ENCODE measurements at regions of chr15 and their contacts with region 1.

Region 1: DNA sequence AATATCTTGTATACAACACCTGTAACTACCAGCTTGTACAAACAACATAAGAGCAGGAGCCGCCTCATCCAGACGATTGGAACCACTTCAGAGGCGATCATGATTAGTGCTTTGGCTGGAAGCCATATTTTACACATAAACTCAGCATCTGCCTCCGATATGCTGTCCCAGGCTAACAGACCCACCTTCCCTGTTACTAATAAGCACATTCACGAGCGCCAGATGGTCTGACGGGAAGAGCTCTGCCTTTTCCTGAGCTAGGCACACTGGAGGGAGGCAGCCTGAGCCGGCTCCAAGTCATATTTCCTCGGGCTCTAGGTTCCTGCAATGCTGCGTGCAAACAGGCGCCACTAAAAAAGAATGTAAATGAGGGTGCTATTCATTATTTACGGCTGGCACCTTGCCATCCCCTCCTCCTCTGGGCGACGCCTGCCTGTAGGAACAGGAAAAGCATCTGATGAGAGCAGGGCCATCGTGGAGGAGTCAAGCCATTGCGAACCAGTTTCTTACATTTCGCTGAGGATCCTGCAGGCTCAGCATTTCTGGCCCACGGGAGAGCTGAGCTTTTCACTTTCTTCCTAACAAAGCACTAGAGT is 98.2 kb downstream of the ANXA2 start:
- DNase-seq: no peak
- ATAC-seq: no peak
- H3K4me3 Mint-ChIP-seq: no peak overlapping the region
- H3K27ac Mint-ChIP-seq: no peak overlapping the region
- H3K4me1 Mint-ChIP-seq: no peaks in the 10 kb centered on the region
- H3K27me3 Mint-ChIP-seq: peaks cover 2% of the 10 kb centered on the region
- CTCF ChIP-seq: no peak

Region 2: GRCh38 chr15:59587068-59587826 is 712.3 kb before region 1 on chr15:
- CTCF ChIA-PET with region 1: no interaction called
- POLR2A ChIA-PET with region 1: interaction called, 10 read pairs
- intact Hi-C with region 1: no loop called
- DNase-seq: no peak
- ATAC-seq: no peak
- H3K4me3 Mint-ChIP-seq: no peak overlapping the region
- H3K27ac Mint-ChIP-seq: no peak overlapping the region
- H3K4me1 Mint-ChIP-seq: no peaks in the 10 kb centered on the region
- H3K27me3 Mint-ChIP-seq: peaks cover 5% of the 10 kb centered on the region
- CTCF ChIP-seq: no peak